ENCODE measurements at regions of chr1 and their contacts with region 1.

Region 1: GRCh38 chr1:20786253-20787028 is 666 bp downstream of the HP1BP3 start:
- DNase-seq: peak; percentile 99
- H3K4me3 Mint-ChIP-seq: peak overlapping the region; percentile 93
- H3K27ac Mint-ChIP-seq: peak overlapping the region; percentile 98
- H3K4me1 Mint-ChIP-seq: peaks cover 24% of the 10 kb centered on the region
- H3K27me3 Mint-ChIP-seq: peaks cover 6% of the 10 kb centered on the region

Region 2: DNA sequence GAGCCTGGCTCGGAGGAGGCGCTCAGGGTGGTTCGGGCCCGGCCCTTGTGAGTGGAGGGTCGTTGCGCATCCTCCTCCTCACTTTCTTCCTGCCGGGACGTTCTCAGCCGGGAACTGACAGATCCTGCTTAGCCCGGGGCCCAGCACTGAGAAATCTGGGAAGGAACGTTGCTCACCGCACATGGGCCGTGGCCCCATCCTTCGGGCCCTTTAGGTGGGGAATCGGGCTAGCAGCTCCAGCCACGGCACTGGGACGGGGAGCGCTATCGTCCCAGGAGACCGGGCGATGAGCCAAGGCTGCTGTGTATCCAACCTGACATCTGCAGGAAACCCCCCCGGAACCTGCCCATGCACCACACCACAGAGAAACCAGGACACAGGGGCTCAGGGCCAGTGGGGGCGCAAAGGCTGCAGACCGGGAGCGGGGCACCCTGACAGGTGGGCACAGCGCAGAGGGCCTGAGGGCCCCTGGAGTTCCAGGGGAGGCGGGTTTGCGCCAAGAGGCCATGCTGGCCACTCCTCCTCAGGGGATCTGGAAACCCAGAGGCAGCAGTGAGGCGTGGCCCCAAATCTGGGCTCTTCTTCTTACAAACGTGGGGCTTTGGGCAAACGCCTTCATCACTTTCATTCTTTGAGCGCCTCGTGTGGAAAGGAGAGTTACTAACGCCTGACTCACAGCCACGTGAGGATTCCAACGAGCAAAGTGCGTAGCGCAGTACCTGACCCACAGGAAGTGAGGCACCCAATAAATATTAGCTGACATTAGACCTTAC is 53.7 kb before region 1 on chr1 and contains the start of gene SH2D5:
- intact Hi-C with region 1: loop called (anchors 2 kb)
- DNase-seq: peak; percentile 90
- H3K4me3 Mint-ChIP-seq: peak within 1 kb of the TSS; percentile 88
- H3K27ac Mint-ChIP-seq: peak within 1 kb of the TSS; percentile 70
- H3K4me1 Mint-ChIP-seq: peaks cover 14% of the 10 kb centered on the region
- H3K27me3 Mint-ChIP-seq: peaks cover 37% of the 10 kb centered on the region
- total RNA-seq, gene SH2D5: 0.23 and 0.24 TPM in 2 replicates

Region 3: GRCh38 chr1:20767271-20767670 is 19.2 kb before region 1 on chr1:
- intact Hi-C with region 1: no loop called
- DNase-seq: no peak
- H3K4me3 Mint-ChIP-seq: no peak overlapping the region
- H3K27ac Mint-ChIP-seq: no peak overlapping the region
- H3K4me1 Mint-ChIP-seq: no peaks in the 10 kb centered on the region
- H3K27me3 Mint-ChIP-seq: no peaks in the 10 kb centered on the region

Region 4: DNA sequence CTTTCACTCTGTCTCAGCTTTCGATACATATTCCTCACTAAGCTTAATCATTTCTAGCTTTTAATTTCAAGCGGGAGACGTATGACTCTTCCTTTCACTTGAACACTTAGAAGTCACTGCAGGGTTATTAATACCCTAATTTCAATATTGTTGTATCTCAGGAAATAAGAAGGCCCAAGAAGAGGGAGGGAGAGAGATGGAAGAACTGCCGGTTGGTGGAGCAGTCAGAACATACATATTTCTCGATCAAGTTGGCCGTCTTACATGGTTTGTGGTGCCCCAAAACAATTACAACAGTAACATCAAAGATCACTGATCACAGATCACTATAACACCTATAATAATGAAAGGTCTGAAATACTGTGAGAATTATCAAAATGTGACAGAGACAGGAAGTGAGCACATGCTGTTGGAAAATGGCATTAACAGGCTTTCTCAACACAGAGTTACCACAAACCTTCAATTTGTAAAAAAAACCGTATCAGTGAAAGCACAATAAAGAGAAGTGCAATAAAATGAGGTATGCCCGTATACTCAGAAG is 146.1 kb after region 1 on chr1:
- intact Hi-C with region 1: loop called (anchors 1 kb)
- DNase-seq: no peak
- H3K4me3 Mint-ChIP-seq: peak overlapping the region; percentile 54
- H3K27ac Mint-ChIP-seq: peak overlapping the region; percentile 84
- H3K4me1 Mint-ChIP-seq: peaks cover 25% of the 10 kb centered on the region
- H3K27me3 Mint-ChIP-seq: no peaks in the 10 kb centered on the region

Region 5: GRCh38 chr1:21022279-21023040 is 236.0 kb after region 1 on chr1:
- intact Hi-C with region 1: loop called (anchors 5 kb)
- DNase-seq: peak; percentile 79
- H3K4me3 Mint-ChIP-seq: peak overlapping the region; percentile 70
- H3K27ac Mint-ChIP-seq: peak overlapping the region; percentile 88
- H3K4me1 Mint-ChIP-seq: peaks cover 20% of the 10 kb centered on the region
- H3K27me3 Mint-ChIP-seq: no peaks in the 10 kb centered on the region

Region 6: DNA sequence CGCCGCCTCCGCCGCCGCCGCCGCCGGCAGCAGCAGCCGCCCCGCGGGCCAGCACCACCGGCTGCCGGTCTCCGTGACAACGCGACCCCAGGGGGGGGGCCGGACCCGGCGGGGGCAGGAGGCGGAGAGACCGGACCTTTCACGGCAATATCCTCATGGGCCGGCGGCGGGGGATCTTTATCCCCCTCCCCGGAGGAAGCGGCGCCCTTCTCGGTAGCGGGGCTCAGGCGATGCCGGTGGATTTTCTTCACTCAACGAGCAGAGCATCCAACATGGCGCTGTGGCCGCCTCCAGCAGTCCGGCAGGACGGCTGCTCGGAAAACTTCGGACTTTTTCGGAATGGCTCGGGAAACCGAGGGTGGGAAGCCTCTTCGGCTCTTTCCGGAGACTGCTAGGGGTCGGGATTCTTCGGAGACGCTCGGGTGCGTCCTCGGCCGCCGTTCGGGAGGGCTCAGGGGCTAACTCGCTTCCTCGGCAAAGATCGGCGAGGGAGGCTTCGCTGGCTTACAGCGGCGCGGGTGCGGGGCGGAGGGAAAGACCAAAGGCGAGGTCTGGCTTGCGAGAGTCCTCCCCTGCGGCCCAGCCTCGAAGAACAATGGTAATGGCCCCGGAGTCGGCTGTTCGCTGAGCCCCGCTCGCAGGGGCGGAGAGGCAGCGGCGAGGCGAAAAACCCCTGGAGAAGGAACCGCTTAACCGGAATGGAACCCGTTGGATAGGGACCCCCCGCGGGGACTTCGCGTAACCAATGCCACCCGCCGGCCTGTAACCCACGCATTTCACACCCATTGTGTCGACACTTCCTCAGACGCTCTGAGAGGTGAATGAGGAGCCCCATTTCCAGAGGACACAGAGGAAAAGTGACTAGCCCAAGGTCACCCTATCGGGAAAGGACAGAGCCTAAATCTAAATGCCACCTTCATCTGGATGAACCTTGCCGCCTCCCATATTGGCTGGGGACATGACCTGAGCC is 390.4 kb after region 1 on chr1 and contains the start of gene EIF4G3:
- intact Hi-C with region 1: loop called (anchors 2 kb)
- DNase-seq: peak; percentile 100
- H3K4me3 Mint-ChIP-seq: peak within 1 kb of the TSS; percentile 89
- H3K27ac Mint-ChIP-seq: peak within 1 kb of the TSS; percentile 91
- H3K4me1 Mint-ChIP-seq: peaks cover 20% of the 10 kb centered on the region
- H3K27me3 Mint-ChIP-seq: peaks cover 2% of the 10 kb centered on the region
- total RNA-seq, gene EIF4G3: 64.0 and 66.8 TPM in 2 replicates

Region 7: GRCh38 chr1:21200767-21201166 is 414.3 kb after region 1 on chr1:
- intact Hi-C with region 1: loop called (anchors 5 kb)
- DNase-seq: no peak
- H3K4me3 Mint-ChIP-seq: no peak overlapping the region
- H3K27ac Mint-ChIP-seq: no peak overlapping the region
- H3K4me1 Mint-ChIP-seq: no peaks in the 10 kb centered on the region
- H3K27me3 Mint-ChIP-seq: peaks cover 8% of the 10 kb centered on the region

Region 8: DNA sequence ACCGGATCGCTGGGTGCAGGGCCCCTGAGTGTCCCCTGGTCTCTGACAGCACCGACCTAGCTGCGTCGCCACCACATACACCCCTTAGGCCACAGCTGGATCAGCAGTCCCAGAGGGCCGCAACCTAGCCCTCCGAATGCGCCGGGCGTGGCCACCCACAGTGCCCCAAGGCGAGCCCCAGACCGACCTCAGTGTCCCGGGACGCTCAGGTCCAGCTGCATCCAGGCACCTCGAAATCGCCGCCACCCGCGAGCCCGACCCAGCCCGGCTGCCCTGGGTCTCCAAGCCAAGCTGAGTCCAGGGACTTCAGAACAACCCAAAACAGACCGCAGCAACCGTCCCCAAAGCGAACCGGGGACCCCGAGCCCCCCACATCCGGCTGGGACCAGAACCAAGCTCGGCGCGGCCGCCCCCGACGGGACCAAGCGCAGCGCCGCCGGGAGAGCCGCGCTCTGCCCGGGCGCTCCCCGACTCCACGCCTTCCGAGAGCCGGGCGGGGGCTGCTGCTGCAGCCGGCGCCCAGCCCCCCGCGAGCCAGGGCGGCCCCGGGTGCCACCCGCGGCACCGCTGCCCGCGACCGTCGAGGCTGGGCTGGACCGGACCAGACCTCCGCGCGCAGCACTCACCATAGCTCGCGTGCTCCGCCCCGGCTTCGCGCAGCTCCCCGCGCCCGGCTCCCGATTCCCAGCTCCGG is 558.5 kb after region 1 on chr1:
- intact Hi-C with region 1: loop called (anchors 10 kb)
- DNase-seq: no peak
- H3K4me3 Mint-ChIP-seq: peak overlapping the region; percentile 88
- H3K27ac Mint-ChIP-seq: peak overlapping the region; percentile 85
- H3K4me1 Mint-ChIP-seq: peaks cover 39% of the 10 kb centered on the region
- H3K27me3 Mint-ChIP-seq: no peaks in the 10 kb centered on the region

Measured in activated CD4-positive, alpha-beta T cell treated with anti-CD3 and anti-CD28 coated beads, Interleukin-2, amount 10 ng/mL, durations not matched to agents 24 days and 14 days (primary cell).